ENCODE measurements at regions of chr9 and their contacts with region 1.

Region 1: GRCh38 chr9:111559000-111559610 is 34.1 kb downstream of the ZNF483 start:
- DNase-seq: peak in 1 of 2 experiments; percentile 40
- H3K4me3 ChIP-seq: no peak overlapping the region
- H3K27ac ChIP-seq: no peak overlapping the region
- H3K4me1 ChIP-seq: no peaks in the 10 kb centered on the region
- H3K27me3 ChIP-seq: no peaks in the 10 kb centered on the region
- CTCF ChIP-seq: no peak
- EP300 ChIP-seq: no peak
- POLR2A ChIP-seq: no peak
- RAD21 ChIP-seq: no peak

Region 2: GRCh38 chr9:111542497-111543254 is 16.4 kb before region 1 on chr9:
- CTCF ChIA-PET with region 1: no interaction called
- POLR2A ChIA-PET with region 1: interaction called, 26 read pairs
- DNase-seq: no peak
- H3K4me3 ChIP-seq: no peak overlapping the region; a peak in 1 of 8 replicates
- H3K27ac ChIP-seq: no peak overlapping the region
- H3K4me1 ChIP-seq: no peaks in the 10 kb centered on the region
- H3K27me3 ChIP-seq: no peaks in the 10 kb centered on the region; a peak in 1 of 7 replicates
- CTCF ChIP-seq: no peak
- EP300 ChIP-seq: no peak
- POLR2A ChIP-seq: no peak
- RAD21 ChIP-seq: no peak

Region 3: DNA sequence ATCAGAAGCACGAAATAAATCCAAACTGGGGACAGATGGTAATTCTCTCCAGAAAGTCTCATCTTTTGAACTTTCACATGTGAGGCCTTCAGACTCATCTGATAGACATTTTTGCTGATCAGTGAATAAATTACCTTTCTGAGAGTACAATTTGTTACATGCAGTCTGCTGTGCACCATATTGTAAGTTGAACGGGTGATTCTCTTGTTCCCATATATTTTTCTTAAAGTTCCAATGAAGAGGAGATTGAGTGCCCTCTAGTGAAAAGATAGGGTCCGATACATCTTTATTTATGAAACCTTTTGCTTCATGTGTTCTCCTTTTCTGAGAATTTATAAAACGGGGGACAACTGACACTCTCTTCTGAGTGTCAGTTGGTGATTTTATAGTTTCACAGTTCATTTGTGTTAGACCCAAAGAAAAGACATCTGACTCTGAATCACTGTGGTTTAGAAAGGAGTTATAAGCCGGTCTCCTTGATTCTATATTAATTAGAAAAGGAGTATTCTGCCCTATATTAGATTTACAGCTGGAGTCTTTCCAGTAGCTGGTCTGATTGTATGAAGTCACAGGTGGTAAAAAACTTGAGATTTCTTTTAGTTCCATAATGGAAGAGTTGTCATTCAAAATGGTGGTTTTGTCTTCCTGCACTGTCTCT is 132.7 kb after region 1 on chr9:
- CTCF ChIA-PET with region 1: no interaction called
- POLR2A ChIA-PET with region 1: no interaction called
- DNase-seq: no peak
- H3K4me3 ChIP-seq: no peak overlapping the region
- H3K27ac ChIP-seq: no peak overlapping the region
- H3K4me1 ChIP-seq: no peaks in the 10 kb centered on the region
- H3K27me3 ChIP-seq: no peaks in the 10 kb centered on the region
- CTCF ChIP-seq: peak in 1 of 3 experiments; percentile 19; a peak in 2 of 4 replicates
- EP300 ChIP-seq: no peak
- POLR2A ChIP-seq: no peak
- RAD21 ChIP-seq: peak; percentile 34 to 49; a peak in 3 of 4 replicates

Measured in H1 (cell line).